ENCODE measurements at regions of chr1 and their contacts with region 1.

Region 1: GRCh38 chr1:201114236-201115131 is 2.3 kb upstream of the CACNA1S start:
- DNase-seq: peak; percentile 90 to 93
- H3K4me3 ChIP-seq: peak overlapping the region; percentile 36
- H3K4me1 ChIP-seq: peaks cover 6% of the 10 kb centered on the region
- H3K27me3 ChIP-seq: no peaks in the 10 kb centered on the region

Region 2: GRCh38 chr1:200979574-200980451 is 134.7 kb before region 1 on chr1:
- in situ Hi-C with region 1: loop called (anchors 5 kb)
- DNase-seq: peak in 1 of 2 experiments; percentile 75
- H3K4me3 ChIP-seq: no peak overlapping the region
- H3K4me1 ChIP-seq: no peaks in the 10 kb centered on the region
- H3K27me3 ChIP-seq: no peaks in the 10 kb centered on the region

Region 3: DNA sequence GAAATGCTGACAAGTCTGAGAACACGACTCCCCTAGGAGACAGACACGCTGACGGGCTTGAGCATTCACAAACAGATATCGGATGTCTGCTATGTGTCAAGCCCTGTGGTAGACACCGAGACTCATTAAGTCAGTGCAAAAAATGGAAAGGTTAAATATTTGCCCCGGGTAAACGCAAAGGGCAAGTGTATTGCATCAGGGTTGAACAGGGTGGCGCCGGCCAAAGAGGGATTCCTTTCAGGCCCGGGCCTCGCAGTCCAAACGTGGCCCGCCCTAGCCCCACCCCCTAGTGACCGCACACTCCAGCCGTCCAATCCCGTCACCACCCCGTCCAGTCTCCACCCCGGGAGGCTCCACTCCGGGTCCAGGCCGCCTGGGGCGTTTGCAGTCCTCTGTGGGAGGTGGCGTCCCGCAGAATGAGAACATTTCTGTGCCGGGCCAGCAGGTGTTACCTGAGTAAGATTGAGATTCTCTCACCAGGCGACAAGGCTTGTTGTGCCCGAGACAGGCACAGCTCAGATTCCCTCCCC is 56.1 kb after region 1 on chr1:
- in situ Hi-C with region 1: loop called (anchors 10 kb)
- DNase-seq: peak; percentile 95 to 98
- H3K4me3 ChIP-seq: peak overlapping the region; percentile 49
- H3K4me1 ChIP-seq: peaks cover 17% of the 10 kb centered on the region
- H3K27me3 ChIP-seq: no peaks in the 10 kb centered on the region

Region 4: GRCh38 chr1:201254625-201255506 is 140.4 kb after region 1 on chr1:
- in situ Hi-C with region 1: no loop called
- DNase-seq: peak; percentile 20 to 88
- H3K4me3 ChIP-seq: no peak overlapping the region
- H3K4me1 ChIP-seq: no peaks in the 10 kb centered on the region
- H3K27me3 ChIP-seq: no peaks in the 10 kb centered on the region